A549 (cell line): ENCODE measurements at regions of chr17 and their contacts with region 1.

Region 1: DNA sequence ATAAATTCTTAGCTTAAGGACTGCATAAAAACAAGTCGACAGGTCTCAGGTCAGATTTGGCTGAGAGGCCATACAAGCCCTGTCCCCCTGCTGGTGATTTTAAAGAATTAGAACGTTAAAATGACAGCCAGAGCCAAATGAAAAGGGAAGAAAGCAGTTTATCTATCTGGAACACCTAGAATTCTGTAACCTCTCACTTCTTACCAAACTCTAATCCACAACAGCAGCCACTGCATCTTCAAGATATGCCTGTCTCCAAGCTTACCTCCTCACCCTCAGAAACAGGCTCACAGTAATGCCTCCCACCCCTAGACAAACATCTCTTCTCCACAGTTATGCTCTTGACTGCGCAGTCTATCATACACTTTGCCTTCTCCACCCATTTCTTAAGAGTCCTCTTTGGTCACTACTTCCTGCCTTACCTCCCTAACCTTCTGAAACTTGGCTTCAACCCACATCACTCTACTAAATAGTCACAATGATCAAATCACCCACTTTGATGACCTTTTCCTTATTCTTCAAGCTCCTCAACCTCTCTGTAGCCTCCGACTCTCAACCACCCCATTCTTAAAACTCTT is 14.2 kb downstream of the ANKFY1 start:
- DNase-seq: peak; percentile 69 to 78
- ATAC-seq: peak; percentile 82 to 87
- H3K4me3 ChIP-seq: no peak overlapping the region
- H3K27ac ChIP-seq: no peak overlapping the region
- H3K4me1 ChIP-seq: peaks cover 11% of the 10 kb centered on the region; the same call in 2 of the 3 replicates
- CTCF ChIP-seq: peak; percentile 62
- EP300 ChIP-seq: no peak
- POLR2A ChIP-seq: no peak
- RAD21 ChIP-seq: peak in 1 of 2 experiments; percentile 48; a peak in 2 of 5 replicates

Region 2: GRCh38 chr17:4214157-4214556 is 35.4 kb before region 1 on chr17:
- CTCF ChIA-PET with region 1: interaction called, 56 read pairs
- POLR2A ChIA-PET with region 1: no interaction called
- DNase-seq: no peak
- ATAC-seq: no peak
- H3K4me3 ChIP-seq: no peak overlapping the region
- H3K27ac ChIP-seq: no peak overlapping the region
- H3K4me1 ChIP-seq: no peaks in the 10 kb centered on the region
- CTCF ChIP-seq: no peak
- EP300 ChIP-seq: no peak
- POLR2A ChIP-seq: no peak
- RAD21 ChIP-seq: no peak

Region 3: GRCh38 chr17:4229627-4230541 is 19.7 kb before region 1 on chr17:
- CTCF ChIA-PET with region 1: interaction called, 34 read pairs
- POLR2A ChIA-PET with region 1: no interaction called
- DNase-seq: peak; percentile 56 to 74
- ATAC-seq: peak; percentile 96 to 97
- H3K4me3 ChIP-seq: no peak overlapping the region
- H3K27ac ChIP-seq: peak overlapping the region; percentile 4 to 50; a peak in 4 of 6 replicates
- H3K4me1 ChIP-seq: peaks cover 22% of the 10 kb centered on the region
- CTCF ChIP-seq: no peak
- EP300 ChIP-seq: no peak
- POLR2A ChIP-seq: no peak
- RAD21 ChIP-seq: no peak

Region 4: GRCh38 chr17:4236456-4236855 is 13.1 kb before region 1 on chr17:
- CTCF ChIA-PET with region 1: interaction called, 29 read pairs
- POLR2A ChIA-PET with region 1: no interaction called
- DNase-seq: no peak
- ATAC-seq: no peak
- H3K4me3 ChIP-seq: no peak overlapping the region
- H3K27ac ChIP-seq: no peak overlapping the region
- H3K4me1 ChIP-seq: peaks cover under 1% of the 10 kb centered on the region; the same call in 2 of the 3 replicates
- CTCF ChIP-seq: no peak
- EP300 ChIP-seq: no peak
- POLR2A ChIP-seq: no peak
- RAD21 ChIP-seq: no peak

Region 5: GRCh38 chr17:4263282-4264215 is 14.0 kb after region 1 on chr17 and contains the start of gene ANKFY1:
- CTCF ChIA-PET with region 1: interaction called, 119 read pairs
- POLR2A ChIA-PET with region 1: no interaction called
- DNase-seq: peak; percentile 94 to 99
- ATAC-seq: peak; percentile 92 to 97
- H3K4me3 ChIP-seq: peak within 1 kb of the TSS; percentile 88
- H3K27ac ChIP-seq: peak within 1 kb of the TSS; percentile 90 to 94
- H3K4me1 ChIP-seq: peaks cover 15% of the 10 kb centered on the region
- CTCF ChIP-seq: no peak
- EP300 ChIP-seq: no peak
- POLR2A ChIP-seq: peak; percentile 89
- RAD21 ChIP-seq: no peak; a peak in 1 of 5 replicates
- polyA plus RNA-seq, gene ANKFY1: 51.7 and 63.3 TPM in 2 replicates

Region 6: GRCh38 chr17:4304417-4305027 is 55.0 kb after region 1 on chr17:
- CTCF ChIA-PET with region 1: interaction called, 12 read pairs
- POLR2A ChIA-PET with region 1: no interaction called
- DNase-seq: peak; percentile 52 to 74
- ATAC-seq: peak; percentile 90 to 92; a peak in 5 of 6 replicates
- H3K4me3 ChIP-seq: no peak overlapping the region
- H3K27ac ChIP-seq: no peak overlapping the region
- H3K4me1 ChIP-seq: peaks cover 8% of the 10 kb centered on the region; the same call in 2 of the 3 replicates
- CTCF ChIP-seq: peak; percentile 92
- EP300 ChIP-seq: no peak
- POLR2A ChIP-seq: no peak
- RAD21 ChIP-seq: peak; percentile 35 to 41; a peak in 3 of 5 replicates

Region 7: DNA sequence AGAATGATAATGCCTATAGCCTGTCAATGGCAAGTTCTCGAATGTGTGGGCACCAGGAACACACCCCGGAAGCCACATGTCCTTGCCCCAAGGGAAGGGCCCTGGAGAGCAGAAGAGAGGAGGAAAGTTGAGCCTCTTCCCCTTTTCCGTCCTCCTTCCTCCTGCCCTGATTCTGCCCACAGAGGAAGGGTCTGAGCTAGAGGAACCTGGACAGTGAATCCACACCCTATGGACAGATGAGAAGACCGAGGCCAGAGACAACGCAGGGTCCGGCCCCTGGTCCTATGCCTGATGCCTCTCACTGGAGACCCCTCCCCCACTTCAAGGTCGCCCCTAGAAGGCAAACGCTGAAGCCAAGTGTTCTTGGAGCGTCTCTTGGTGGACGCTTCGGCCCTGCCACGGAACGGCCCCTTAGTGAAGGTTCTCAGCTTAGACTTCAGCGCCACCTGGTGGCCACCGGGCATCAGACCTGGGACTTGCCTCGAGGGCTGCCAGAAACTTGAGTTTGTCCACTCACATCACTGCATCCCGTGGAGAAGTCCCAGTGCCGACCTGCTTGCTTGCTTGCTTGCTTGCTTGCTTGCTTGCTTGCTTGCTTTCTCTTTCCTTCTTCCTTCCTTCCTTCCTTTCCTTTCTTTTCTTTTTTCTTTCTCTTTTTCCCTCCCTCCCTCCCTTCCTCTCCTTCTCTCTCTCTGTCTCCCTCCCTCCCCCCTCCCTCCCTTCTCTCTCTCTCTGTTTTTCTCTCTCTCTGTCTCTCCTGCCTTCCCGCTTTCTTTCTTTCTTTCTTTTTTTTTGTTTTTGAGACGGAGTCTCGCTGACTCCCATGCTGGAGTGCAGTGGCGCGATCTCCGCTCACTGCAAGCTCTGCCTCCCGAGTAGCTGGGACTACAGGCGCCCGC is 163.6 kb after region 1 on chr17:
- CTCF ChIA-PET with region 1: interaction called, 10 read pairs
- POLR2A ChIA-PET with region 1: no interaction called
- DNase-seq: peak; percentile 91 to 92
- ATAC-seq: peak; percentile 99 to 100
- H3K4me3 ChIP-seq: no peak overlapping the region
- H3K27ac ChIP-seq: no peak overlapping the region
- H3K4me1 ChIP-seq: no peaks in the 10 kb centered on the region
- CTCF ChIP-seq: peak; percentile 98
- EP300 ChIP-seq: no peak
- POLR2A ChIP-seq: no peak
- RAD21 ChIP-seq: peak; percentile 99 to 100